ENCODE measurements at regions of chr7 and their contacts with region 1.

Region 1: DNA sequence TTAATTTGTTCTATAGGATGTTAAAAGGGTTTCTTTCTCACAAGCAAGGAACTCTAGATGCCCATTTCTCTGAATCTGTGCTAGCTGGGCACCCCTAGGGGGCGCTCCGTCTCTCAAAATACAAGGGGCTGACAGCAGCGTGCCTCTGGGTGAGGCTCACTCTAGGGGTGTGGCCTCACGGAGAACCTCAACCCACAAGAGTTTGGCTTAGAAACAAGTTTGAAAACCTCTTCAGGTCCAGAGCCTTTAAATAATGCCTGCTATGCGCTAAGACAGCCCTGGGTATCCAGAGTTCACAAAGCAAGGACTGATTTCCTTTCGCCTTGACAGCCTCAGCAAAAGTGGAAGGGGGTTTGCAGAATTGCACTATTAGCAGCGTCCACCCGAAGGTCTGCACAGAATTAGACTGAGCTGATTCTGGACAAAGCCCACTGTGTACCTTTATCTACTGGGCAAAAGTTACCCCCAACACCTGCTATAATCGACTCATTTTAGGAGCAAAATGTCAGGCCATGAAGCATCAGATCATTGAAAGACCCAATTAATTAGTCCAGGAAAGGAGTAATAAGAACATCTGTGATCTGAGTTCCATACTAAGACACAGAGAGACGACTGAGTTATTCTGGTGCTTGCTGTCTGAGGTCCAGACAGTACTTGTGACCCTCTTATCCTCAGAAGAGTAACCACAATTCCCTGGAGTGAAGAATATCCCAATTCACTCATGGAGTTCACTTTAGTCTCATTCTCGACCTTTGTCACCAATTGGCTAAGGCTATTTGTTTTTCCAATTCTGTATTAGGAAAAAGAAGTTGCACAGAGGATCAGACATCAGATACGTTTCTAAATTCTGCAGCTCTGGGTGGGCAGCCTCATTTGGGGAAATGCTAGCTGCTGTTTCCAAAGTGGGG is 574 bp upstream of the CPED1 start:
- DNase-seq: peak; percentile 89
- H3K4me3 Mint-ChIP-seq: peak overlapping the region; percentile 58
- H3K27ac Mint-ChIP-seq: no peak overlapping the region
- H3K4me1 Mint-ChIP-seq: peaks cover 19% of the 10 kb centered on the region
- H3K27me3 Mint-ChIP-seq: peaks cover 45% of the 10 kb centered on the region

Region 2: GRCh38 chr7:120950539-120951308 is 37.2 kb before region 1 on chr7 and contains the start of gene ING3:
- CTCF ChIA-PET with region 1: interaction called, 11 read pairs
- POLR2A ChIA-PET with region 1: no interaction called
- DNase-seq: peak; percentile 98
- H3K4me3 Mint-ChIP-seq: peak within 1 kb of the TSS; percentile 88
- H3K27ac Mint-ChIP-seq: peak within 1 kb of the TSS; percentile 99
- H3K4me1 Mint-ChIP-seq: peaks cover 27% of the 10 kb centered on the region
- H3K27me3 Mint-ChIP-seq: peaks cover 4% of the 10 kb centered on the region
- total RNA-seq, gene ING3: 24.7 to 28.3 TPM

Region 3: DNA sequence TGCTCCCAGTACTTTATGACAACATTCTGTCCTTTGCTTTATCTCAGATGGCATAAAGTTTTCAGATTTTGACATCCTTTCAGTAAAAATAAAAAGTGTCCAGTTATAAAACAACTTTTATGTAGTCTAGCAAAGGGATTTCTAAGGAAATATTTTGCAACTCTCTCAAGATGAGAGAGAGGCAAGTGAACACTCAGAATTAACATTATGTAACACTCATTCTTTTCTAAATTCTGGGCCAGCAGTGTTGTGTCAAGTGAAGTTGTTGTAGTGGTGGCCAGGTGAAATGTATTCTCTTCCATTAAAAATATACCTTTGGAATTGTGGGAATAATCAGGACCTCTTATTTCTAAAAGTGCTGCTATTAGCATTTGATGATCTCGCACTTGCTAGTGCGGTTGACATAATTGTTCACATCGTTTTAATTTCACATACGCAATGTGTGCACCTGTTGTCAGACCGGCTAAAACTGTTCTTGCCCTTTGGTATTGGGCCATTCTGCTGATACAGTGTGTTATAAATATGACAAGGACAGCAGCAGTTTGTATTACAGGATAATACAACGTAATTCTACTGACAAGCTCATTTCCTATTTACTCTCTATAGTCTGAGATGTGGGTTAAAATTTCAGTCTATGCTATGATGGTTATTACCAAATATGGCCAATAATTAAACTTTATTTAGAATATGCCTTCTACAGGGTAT is 24.4 kb after region 1 on chr7:
- CTCF ChIA-PET with region 1: no interaction called
- POLR2A ChIA-PET with region 1: no interaction called
- DNase-seq: no peak
- H3K4me3 Mint-ChIP-seq: no peak overlapping the region
- H3K27ac Mint-ChIP-seq: no peak overlapping the region
- H3K4me1 Mint-ChIP-seq: no peaks in the 10 kb centered on the region
- H3K27me3 Mint-ChIP-seq: peaks cover 4% of the 10 kb centered on the region